ENCODE measurements at regions of chr3 and their contacts with region 1.

Region 1: GRCh38 chr3:13884851-13885703 is 5.2 kb upstream of the WNT7A start:
- DNase-seq: peak in 2 of 10 donors; percentile 32 to 36
- H3K4me3 ChIP-seq: no peak overlapping the region
- H3K27ac ChIP-seq: no peak overlapping the region
- H3K27me3 ChIP-seq: peaks cover 0 to 16% (median 3%) of the 10 kb centered on the region in 45 donors
- CTCF ChIP-seq: peak in 55 of 56 donors; percentile 26 to 67 (median 53)

Region 2: DNA sequence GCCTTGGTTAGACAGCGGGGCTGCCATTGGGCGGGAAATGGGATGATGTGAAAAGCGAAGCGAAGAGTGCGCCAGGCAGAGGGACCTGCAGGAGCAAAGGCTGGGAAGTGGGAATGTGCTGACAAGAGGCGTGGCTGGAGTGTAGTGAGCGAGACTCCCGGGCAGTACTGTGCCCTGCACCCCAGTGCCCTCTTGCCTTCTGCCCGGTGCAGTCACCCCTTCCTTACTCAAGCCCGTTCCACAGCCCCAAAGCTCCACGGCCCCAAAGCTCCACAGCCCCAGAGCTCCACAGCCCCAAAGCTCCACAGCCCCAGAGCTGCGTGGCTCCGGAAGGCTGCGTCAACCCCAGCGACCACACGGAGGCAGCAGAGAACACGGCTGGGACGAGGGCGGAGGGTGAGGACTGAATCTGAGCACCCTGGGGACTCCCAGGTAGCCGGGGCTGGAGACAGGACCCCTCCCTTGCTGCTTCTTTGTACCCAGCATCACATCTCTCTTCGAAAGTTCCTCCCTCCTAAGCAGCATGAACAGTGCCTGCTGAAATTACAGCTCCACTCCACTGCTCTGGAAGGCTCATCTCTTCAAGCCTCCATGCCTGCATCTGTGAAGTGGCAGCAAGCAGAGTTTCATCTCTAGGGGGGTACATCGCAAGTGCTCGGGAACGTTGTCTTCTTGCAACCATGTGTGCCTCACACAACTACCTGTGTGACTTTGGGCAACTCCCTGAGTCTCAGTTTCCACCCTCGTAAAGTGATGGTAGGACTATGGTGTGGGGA is 227.2 kb before region 1 on chr3:
- intact Hi-C with region 1: loop called (anchors 1 to 2 kb)
- DNase-seq: peak in 8 of 10 donors; percentile 43 to 80 (median 60)
- H3K4me3 ChIP-seq: peak overlapping the region in 1 of 59 donors; percentile 9
- H3K27ac ChIP-seq: peak overlapping the region in 1 of 59 donors; percentile 28
- H3K27me3 ChIP-seq: peaks cover 0 to 7% (median 0%) of the 10 kb centered on the region in 45 donors
- CTCF ChIP-seq: peak in 55 of 56 donors; percentile 22 to 87 (median 77)

Region 3: GRCh38 chr3:13866041-13866965 is 18.8 kb before region 1 on chr3:
- intact Hi-C with region 1: no loop called
- DNase-seq: no peak
- H3K4me3 ChIP-seq: no peak overlapping the region
- H3K27ac ChIP-seq: peak overlapping the region in 2 of 59 donors; percentile 10 to 25
- H3K27me3 ChIP-seq: peaks cover 0 to 4% (median 0%) of the 10 kb centered on the region in 45 donors
- CTCF ChIP-seq: no peak

Measured in dorsolateral prefrontal cortex (tissue), 120 donors.